ENCODE measurements at regions of chr4 and their contacts with region 1.

Region 1: DNA sequence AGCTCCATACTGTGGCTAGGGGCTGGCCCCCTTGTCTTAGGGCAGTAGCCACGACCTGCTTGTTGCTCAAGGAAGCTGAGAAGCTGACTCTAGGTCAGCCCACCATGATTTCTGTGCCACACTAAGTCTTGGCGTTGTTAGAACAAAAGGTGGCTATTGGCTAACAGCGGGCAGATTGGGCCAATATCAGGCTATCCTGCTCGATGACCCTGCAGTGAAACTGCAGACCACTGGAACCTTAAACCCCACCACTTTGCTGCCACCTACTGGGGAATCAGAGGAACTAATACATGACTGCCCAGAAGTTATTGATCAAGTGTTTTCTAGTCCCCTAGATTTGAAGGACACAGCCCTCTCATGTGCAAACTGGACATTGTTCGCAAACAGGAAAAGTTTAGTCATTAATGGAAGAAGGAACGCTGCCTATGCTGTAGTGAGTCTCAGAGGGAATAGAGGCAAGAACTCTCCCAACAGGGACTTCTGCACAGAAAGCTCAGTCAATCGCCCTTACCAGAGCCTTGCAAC is 17.0 kb upstream of the PAPSS1 start:
- DNase-seq: peak in 12 of 14 experiments; percentile 14 to 71 (median 19)
- ATAC-seq: no peak
- H3K4me3 ChIP-seq: no peak overlapping the region
- H3K4me3 Mint-ChIP-seq: no peak overlapping the region
- H3K27ac ChIP-seq: no peak overlapping the region
- H3K27ac Mint-ChIP-seq: no peak overlapping the region
- H3K4me1 ChIP-seq: peaks cover 4% of the 10 kb centered on the region
- H3K4me1 Mint-ChIP-seq: no peaks in the 10 kb centered on the region
- H3K27me3 ChIP-seq: no peaks in the 10 kb centered on the region
- H3K27me3 Mint-ChIP-seq: no peaks in the 10 kb centered on the region
- CTCF ChIP-seq: peak; percentile 88

Region 2: DNA sequence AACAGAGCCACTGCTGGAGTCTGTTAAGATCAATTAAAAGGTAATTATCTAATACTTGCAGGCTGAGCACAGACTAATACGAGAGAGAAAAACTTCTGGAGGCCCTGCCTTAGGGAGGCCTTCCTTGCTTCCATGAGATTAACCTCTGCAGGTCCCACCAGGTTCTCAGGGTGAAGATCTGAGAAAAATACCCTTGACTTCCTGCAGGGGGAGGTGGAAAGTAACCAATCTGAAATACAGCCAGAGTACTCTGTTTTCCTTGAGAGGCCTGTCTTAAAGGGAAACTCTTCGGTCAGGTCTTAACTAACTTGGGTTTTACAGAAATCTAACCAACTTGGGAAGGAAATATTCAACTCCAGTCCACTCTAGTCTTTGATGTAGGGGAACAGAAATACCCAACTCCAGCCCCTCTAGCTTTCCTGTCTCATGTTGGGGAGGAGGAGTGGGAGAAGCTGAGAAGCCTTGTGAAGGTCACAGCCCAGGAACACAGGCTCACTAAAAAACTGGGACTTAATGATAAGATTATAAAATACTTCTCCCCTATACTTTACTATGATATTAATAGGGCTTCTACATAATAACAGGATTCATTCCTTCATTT is 1498.1 kb before region 1 on chr4:
- CTCF ChIA-PET with region 1: no interaction called
- POLR2A ChIA-PET with region 1: no interaction called
- intact Hi-C with region 1: loop called in 1 of 2 experiments (anchors 10 kb)
- DNase-seq: peak in 3 of 14 experiments; percentile 11 to 29 (median 26)
- ATAC-seq: peak; percentile 26
- H3K4me3 ChIP-seq: no peak overlapping the region
- H3K4me3 Mint-ChIP-seq: no peak overlapping the region
- H3K27ac ChIP-seq: no peak overlapping the region
- H3K27ac Mint-ChIP-seq: no peak overlapping the region
- H3K4me1 ChIP-seq: no peaks in the 10 kb centered on the region
- H3K4me1 Mint-ChIP-seq: no peaks in the 10 kb centered on the region
- H3K27me3 ChIP-seq: no peaks in the 10 kb centered on the region
- H3K27me3 Mint-ChIP-seq: no peaks in the 10 kb centered on the region
- CTCF ChIP-seq: peak; percentile 54

Region 3: DNA sequence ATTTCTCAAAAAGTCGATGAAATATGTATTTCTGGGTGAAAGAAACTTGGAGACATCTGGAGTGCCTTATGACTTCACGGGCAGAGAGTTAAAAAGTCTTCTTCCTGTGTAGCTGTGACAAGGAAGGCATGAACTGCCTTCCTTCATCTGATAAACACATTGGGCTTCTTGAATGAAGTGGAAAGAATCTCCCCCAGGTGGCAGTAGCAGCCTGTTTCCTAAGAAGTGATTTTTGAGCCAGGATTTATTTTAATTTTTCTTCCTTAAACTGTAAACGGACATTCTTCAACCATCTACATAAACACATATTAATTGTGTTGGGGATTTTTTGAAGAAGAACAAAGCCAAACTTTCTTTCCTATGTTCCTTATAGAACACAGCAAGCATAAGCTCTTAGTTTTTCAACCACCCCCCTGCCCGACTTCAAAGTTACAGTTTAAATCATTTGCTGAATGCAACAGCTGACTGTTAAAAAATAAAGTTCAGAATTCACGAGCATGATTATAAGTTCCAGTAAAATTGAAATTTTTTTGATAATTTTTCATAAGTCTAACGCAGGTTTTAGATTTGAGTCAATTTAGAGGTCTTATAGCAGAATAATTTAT is 1367.4 kb before region 1 on chr4:
- CTCF ChIA-PET with region 1: no interaction called
- POLR2A ChIA-PET with region 1: no interaction called
- intact Hi-C with region 1: loop called in 1 of 2 experiments (anchors 2 kb)
- DNase-seq: peak in 3 of 14 experiments; percentile 19 to 38 (median 33)
- ATAC-seq: no peak
- H3K4me3 ChIP-seq: no peak overlapping the region
- H3K4me3 Mint-ChIP-seq: no peak overlapping the region
- H3K27ac ChIP-seq: no peak overlapping the region
- H3K27ac Mint-ChIP-seq: no peak overlapping the region
- H3K4me1 ChIP-seq: no peaks in the 10 kb centered on the region
- H3K4me1 Mint-ChIP-seq: no peaks in the 10 kb centered on the region
- H3K27me3 ChIP-seq: peaks cover 0 to 14% of the 10 kb centered on the region in 2 experiments
- H3K27me3 Mint-ChIP-seq: peaks cover 29% of the 10 kb centered on the region
- CTCF ChIP-seq: peak; percentile 15

Region 4: DNA sequence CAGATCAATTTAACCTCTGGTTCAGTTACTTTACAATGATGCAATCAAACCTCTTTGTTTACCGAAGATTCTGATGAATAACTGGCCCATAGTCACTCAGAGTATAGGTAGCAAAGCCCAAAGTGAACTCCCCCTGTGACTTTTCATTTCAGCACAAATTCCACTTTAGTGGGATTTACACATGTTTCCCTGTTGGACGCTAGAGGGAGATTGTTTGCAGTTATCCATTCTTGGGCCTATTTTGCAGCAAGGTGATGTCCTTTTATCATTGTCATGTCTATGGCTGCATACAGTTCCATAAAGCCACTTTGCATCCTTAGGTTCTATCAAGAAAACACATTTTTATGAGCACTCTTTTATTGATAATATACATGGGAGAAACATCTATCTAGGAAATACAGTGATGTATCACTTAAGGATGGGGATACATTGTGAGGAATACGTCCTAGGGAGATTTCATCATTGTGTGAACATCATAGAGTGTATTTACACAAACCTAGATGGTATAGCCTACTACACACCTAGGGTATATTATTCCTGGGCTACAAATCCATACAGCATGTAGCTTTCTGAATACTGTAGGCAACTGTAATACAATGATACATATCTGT is 686.4 kb before region 1 on chr4:
- CTCF ChIA-PET with region 1: no interaction called
- POLR2A ChIA-PET with region 1: no interaction called
- intact Hi-C with region 1: loop called (anchors 10 kb)
- DNase-seq: no peak
- ATAC-seq: no peak
- H3K4me3 ChIP-seq: no peak overlapping the region
- H3K4me3 Mint-ChIP-seq: no peak overlapping the region
- H3K27ac ChIP-seq: no peak overlapping the region
- H3K27ac Mint-ChIP-seq: no peak overlapping the region
- H3K4me1 ChIP-seq: no peaks in the 10 kb centered on the region
- H3K4me1 Mint-ChIP-seq: no peaks in the 10 kb centered on the region
- H3K27me3 ChIP-seq: no peaks in the 10 kb centered on the region
- H3K27me3 Mint-ChIP-seq: no peaks in the 10 kb centered on the region
- CTCF ChIP-seq: no peak

Region 5: DNA sequence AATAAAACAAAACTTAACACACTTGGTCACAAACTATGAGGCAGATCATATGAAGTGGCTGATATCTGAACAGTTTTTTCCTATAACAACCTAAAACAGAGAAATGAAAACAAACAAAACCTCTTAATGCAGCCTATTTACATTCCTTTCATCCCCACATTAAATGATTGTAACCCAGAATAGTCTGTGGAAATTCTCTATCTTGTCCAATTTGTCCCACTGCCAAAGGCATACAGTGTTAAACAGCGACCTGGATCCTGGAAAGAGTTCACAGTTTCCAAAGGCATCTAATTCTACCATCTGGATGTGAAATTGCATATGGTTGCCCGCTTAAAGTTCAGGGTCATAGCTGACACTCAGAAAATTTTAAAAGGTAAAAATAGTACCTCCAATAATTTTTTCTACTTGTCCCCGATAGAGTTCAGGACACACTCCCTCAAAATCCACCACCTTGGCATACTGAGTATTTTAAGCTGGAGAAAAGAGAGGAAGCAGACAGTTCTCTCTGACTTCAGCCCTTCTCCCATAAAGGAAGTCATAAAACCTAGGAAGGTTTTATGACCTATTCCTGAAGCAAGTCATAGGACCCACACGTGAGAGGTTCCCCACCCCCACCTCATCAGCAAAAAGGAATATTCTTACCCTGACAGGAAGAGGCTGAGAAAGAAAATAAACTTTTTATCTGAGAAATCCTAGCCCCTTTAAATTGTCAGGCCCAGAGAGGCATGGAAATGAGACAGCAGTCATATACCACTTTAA is 287.2 kb before region 1 on chr4:
- CTCF ChIA-PET with region 1: no interaction called
- POLR2A ChIA-PET with region 1: no interaction called
- intact Hi-C with region 1: loop called in 1 of 2 experiments (anchors 10 kb)
- DNase-seq: no peak
- ATAC-seq: no peak
- H3K4me3 ChIP-seq: no peak overlapping the region
- H3K4me3 Mint-ChIP-seq: no peak overlapping the region
- H3K27ac ChIP-seq: no peak overlapping the region
- H3K27ac Mint-ChIP-seq: no peak overlapping the region
- H3K4me1 ChIP-seq: no peaks in the 10 kb centered on the region
- H3K4me1 Mint-ChIP-seq: no peaks in the 10 kb centered on the region
- H3K27me3 ChIP-seq: no peaks in the 10 kb centered on the region
- H3K27me3 Mint-ChIP-seq: peaks cover 11% of the 10 kb centered on the region
- CTCF ChIP-seq: no peak

Measured in CD4-positive, alpha-beta T cell (primary cell).